Activated T-helper 1 cell treated with anti-CD3 and anti-CD28 coated beads, Interleukin-12 subunit alpha, Interleukin-12 subunit beta, Interleukin-2, Interleukin-4 antibody, amounts not matched to agents 30 ng/mL and 10 ng/mL and 1 ng/mL, durations not matched to agents 14 hours and 24 hours and 36 hours (primary cell): ENCODE measurements at regions of chr3 and their contacts with region 1.

Region 1: GRCh38 chr3:158644345-158644908 is at the start of gene GFM1:
- DNase-seq: peak; percentile 87
- H3K4me3 Mint-ChIP-seq: peak within 1 kb of the TSS; percentile 88
- H3K27ac Mint-ChIP-seq: peak within 1 kb of the TSS; percentile 83
- H3K4me1 Mint-ChIP-seq: peaks cover 34% of the 10 kb centered on the region
- H3K27me3 Mint-ChIP-seq: no peaks in the 10 kb centered on the region
- total RNA-seq, gene GFM1: 70.4 and 71.7 TPM in 2 replicates

Region 2: GRCh38 chr3:157174649-157175498 is 1469.6 kb before region 1 on chr3:
- intact Hi-C with region 1: loop called (anchors 5 kb)
- DNase-seq: peak; percentile 98
- H3K4me3 Mint-ChIP-seq: peak overlapping the region; percentile 94
- H3K27ac Mint-ChIP-seq: peak overlapping the region; percentile 96
- H3K4me1 Mint-ChIP-seq: peaks cover 47% of the 10 kb centered on the region
- H3K27me3 Mint-ChIP-seq: peaks cover 2% of the 10 kb centered on the region

Region 3: DNA sequence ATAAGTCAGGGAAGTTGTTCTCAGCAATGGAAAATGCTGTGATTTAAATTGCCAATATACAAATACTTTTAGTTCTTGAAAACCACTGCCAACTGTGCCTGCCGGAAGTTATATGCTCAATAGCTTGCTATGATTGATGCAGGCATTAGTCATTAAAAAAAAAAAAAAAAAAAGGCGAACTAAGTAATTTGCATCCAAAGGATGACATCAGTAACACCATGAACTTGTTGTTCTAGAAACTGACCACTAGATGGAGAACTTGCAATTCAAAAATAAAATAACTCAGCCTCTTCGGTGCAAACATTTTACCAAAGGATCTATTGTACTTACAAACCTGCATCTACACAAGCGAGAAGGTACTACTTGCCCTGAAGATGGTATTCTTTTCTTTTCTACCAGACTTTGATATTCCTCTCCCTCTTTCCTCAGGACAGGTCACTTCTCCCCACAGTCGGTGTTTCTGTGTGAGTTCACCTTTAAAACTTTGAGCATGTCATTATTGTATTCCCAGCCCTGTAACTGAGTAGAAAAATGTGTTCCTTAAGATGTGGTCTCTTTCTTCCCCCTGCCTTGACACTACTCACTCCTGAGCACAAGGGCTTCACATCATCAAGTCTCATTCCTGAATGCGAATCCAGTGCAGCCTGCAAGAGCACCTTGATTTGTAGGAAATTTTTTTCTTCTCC is 1026.2 kb before region 1 on chr3:
- intact Hi-C with region 1: loop called (anchors 10 kb)
- DNase-seq: no peak
- H3K4me3 Mint-ChIP-seq: no peak overlapping the region
- H3K27ac Mint-ChIP-seq: no peak overlapping the region
- H3K4me1 Mint-ChIP-seq: peaks cover 8% of the 10 kb centered on the region
- H3K27me3 Mint-ChIP-seq: peaks cover 15% of the 10 kb centered on the region

Region 4: DNA sequence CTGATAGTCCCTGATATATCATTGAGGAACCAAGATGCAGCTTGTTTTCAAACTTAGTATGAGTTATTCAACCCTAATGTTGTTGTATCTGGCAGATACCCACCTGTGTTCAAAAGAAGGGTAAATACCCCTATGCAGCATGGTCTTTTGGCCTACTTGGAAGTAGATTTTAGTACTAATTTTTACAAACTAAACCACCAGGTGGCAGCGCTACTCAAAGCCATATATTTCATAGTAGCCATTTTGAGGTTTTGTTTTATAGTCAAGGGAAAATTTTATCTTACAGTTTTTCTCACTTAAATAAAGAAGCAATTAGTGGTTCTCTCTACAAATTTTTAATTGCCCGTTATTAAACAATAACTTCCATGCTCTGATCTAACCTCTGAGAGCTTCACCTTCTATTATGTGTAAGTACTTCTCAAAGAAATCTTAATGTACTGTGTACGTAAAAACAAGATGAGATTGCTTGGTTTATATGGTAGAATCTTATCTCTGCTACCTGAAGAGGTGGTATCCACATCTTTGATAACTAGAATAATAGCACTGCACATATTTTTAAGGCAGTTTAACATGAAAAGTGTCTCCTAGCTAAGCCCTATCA is 104.9 kb before region 1 on chr3:
- intact Hi-C with region 1: loop called (anchors 5 kb)
- DNase-seq: peak; percentile 6
- H3K4me3 Mint-ChIP-seq: no peak overlapping the region
- H3K27ac Mint-ChIP-seq: no peak overlapping the region
- H3K4me1 Mint-ChIP-seq: no peaks in the 10 kb centered on the region
- H3K27me3 Mint-ChIP-seq: no peaks in the 10 kb centered on the region

Region 5: DNA sequence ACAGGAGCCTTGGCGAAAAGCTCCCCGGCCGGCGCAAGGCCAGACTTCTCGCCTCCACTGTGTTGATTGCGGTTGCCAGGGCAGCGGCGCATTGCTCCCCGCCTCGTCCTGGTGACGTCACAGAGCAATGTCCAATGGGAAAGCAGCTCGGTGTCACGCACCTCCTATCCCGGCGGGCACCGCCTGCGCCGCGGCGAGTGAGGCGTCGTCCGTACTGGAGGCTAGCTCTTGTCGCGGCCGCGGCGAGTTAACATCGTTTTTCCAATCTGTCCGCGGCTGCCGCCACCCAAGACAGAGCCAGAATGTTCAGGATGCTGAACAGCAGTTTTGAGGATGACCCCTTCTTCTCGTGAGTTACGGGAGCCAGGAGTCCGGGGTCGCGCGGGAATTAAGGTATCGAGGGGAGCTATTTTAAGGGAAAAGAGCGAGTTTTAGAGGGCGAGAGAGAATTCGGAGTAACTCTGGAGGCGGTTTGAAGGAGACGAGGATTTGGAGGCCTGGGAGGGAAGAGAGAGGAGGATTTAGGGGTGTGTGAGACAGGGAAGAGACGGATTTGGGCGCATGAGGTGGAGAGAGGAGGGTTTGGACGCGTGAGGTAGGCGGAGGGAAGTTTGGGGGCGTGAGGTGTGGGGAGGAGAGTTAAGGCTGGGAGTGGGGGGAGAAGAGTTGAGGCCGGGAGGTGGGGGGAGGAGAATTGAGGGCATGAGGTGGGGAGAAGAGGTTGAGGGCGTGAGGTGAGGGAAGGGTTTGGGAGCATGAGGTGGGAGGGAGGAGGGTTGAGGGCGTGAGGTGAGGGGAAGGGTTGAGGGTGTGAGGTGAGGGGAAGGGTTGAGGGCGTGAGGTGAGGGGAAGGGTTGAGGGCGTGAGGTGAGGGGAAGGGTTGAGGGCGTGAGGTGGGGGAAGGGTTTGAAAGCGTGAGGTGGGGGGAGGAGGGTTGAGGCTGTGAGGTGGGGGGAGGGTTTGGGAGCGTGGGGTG is 73.1 kb before region 1 on chr3 and contains the start of gene MLF1:
- intact Hi-C with region 1: loop called (anchors 5 kb)
- DNase-seq: peak; percentile 80
- H3K4me3 Mint-ChIP-seq: peak within 1 kb of the TSS; percentile 85
- H3K27ac Mint-ChIP-seq: peak within 1 kb of the TSS; percentile 83
- H3K4me1 Mint-ChIP-seq: peaks cover 13% of the 10 kb centered on the region
- H3K27me3 Mint-ChIP-seq: peaks cover 33% of the 10 kb centered on the region
- total RNA-seq, gene MLF1: 0.78 and 0.83 TPM in 2 replicates

Region 6: GRCh38 chr3:158659454-158660237 is 15.2 kb after region 1 on chr3:
- intact Hi-C with region 1: loop called (anchors 1 kb)
- DNase-seq: peak; percentile 40
- H3K4me3 Mint-ChIP-seq: no peak overlapping the region
- H3K27ac Mint-ChIP-seq: no peak overlapping the region
- H3K4me1 Mint-ChIP-seq: no peaks in the 10 kb centered on the region
- H3K27me3 Mint-ChIP-seq: no peaks in the 10 kb centered on the region

Region 7: GRCh38 chr3:158976966-158977365 is 332.5 kb after region 1 on chr3:
- intact Hi-C with region 1: no loop called
- DNase-seq: no peak
- H3K4me3 Mint-ChIP-seq: no peak overlapping the region
- H3K27ac Mint-ChIP-seq: no peak overlapping the region
- H3K4me1 Mint-ChIP-seq: no peaks in the 10 kb centered on the region
- H3K27me3 Mint-ChIP-seq: no peaks in the 10 kb centered on the region